ENCODE measurements at regions of chr13 and their contacts with region 1.

Region 1: GRCh38 chr13:32586080-32586900 is at the start of gene PDS5B:
- DNase-seq: peak; percentile 77 to 97
- H3K4me3 ChIP-seq: peak within 1 kb of the TSS; percentile 88 to 96
- H3K27ac ChIP-seq: peak within 1 kb of the TSS; percentile 86 to 98
- H3K4me1 ChIP-seq: peaks cover 0 to 18% of the 10 kb centered on the region in 2 donors
- H3K27me3 ChIP-seq: no peaks in the 10 kb centered on the region
- CTCF ChIP-seq: peak; percentile 57 to 99 (median 69)
- total RNA-seq, gene PDS5B: 31.0 TPM

Region 2: DNA sequence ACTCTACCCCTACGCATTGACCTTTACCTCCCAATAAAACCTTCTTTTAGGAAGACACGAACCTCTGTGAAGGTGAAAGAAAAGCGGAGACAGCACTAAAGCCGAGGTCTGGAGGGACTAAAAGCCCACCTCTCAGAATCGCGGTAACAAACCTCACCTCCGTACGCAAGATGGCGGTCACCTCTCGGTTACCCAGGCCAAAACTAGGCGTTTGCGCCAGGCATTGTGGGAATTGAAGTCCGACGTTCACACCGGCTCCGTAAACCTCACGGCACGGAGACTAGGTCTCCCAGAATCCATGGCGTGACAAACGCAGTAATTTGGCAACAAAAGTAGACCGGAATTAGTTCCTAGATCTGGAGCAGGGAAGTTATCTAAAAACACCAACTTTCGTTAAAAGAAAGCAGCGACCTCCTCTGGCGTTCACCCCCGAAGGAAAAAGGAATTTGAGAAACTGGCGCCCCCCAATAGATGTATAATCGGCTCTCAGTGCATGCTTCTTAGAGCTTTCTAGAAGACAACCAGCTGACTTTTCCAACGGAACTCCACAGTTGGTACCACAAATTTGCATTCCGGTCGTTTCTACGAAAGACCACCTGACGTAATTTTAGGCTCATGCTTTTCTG is 47.6 kb before region 1 on chr13 and contains the start of gene N4BP2L2:
- intact Hi-C with region 1: loop called (anchors 2 kb)
- DNase-seq: peak; percentile 84 to 97
- H3K4me3 ChIP-seq: peak within 1 kb of the TSS; percentile 76 to 83
- H3K27ac ChIP-seq: peak within 1 kb of the TSS; percentile 81 to 93
- H3K4me1 ChIP-seq: peaks cover 3 to 18% of the 10 kb centered on the region in 2 donors
- H3K27me3 ChIP-seq: no peaks in the 10 kb centered on the region
- CTCF ChIP-seq: peak; percentile 9 to 37 (median 27)
- total RNA-seq, gene N4BP2L2: 137 TPM

Region 3: DNA sequence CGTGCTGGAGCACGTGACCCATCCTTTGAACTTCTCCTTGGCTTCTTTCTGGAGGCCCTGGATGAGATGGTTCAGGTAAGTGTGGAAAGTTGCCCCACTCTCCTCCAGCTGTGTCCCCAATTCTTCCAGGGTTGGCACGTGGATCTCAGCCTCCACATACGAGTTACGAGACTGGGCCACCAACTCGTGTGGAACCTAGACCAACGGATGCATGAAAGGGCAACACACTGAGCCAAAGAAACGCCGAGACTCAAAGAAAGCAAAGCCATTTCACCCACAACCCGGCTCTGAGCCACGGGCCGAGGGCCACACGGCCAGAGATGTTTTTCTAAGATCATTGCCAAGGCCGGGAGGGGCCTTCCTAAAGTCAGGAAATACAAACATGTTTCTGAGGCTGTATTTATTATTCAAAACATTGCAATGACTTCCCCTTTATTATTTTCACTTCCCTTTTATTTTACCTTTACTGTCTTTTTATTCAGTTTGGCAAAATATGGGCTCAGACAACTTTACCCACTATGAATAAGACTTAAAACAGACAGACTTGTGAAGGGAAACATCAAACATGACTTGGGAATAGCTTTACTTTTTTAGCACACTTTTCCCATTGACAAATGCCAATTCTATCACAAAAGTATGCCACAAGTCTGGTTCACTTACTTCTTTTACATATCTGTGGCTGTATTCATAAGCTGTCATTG is 524.6 kb after region 1 on chr13:
- intact Hi-C with region 1: loop called (anchors 5 kb)
- DNase-seq: peak in 1 of 2 donors; percentile 77
- H3K4me3 ChIP-seq: peak overlapping the region in 1 of 2 donors; percentile 29
- H3K27ac ChIP-seq: peak overlapping the region; percentile 64 to 81
- H3K4me1 ChIP-seq: peaks cover 24 to 47% of the 10 kb centered on the region in 2 donors
- H3K27me3 ChIP-seq: no peaks in the 10 kb centered on the region
- CTCF ChIP-seq: no peak

Region 4: DNA sequence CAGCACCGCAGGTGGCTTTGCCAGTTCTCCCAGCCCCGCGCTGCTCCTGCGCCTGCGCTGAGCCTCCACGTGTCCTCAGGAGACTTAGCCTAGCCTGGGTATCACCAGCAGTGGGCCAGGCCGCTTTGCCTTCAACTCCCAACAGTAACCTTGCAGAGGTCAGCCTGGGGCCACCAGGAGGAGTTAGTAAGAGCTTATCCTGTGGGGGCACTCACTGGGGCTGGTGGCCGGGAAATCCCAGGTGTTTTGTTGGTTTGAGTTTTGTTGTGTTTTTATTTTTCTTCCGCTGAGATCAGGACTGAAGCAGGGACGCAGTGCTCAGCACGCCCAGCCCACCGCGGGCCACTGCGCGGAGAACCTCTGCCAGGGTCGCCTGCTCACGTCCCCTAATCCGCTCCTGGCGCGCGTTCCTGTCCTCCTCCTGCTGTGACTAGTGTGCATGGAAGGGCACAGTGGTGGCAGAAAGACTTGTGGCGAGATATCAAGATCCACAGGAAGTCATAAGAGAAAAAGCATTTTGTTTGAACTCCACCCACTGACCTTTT is 1024.3 kb after region 1 on chr13:
- intact Hi-C with region 1: loop called (anchors 5 kb)
- DNase-seq: peak; percentile 14 to 84
- H3K4me3 ChIP-seq: peak overlapping the region; percentile 40 to 64
- H3K27ac ChIP-seq: peak overlapping the region; percentile 89 to 90
- H3K4me1 ChIP-seq: peaks cover 0 to 11% of the 10 kb centered on the region in 2 donors
- H3K27me3 ChIP-seq: no peaks in the 10 kb centered on the region
- CTCF ChIP-seq: no peak